Activated CD8-positive, alpha-beta T cell treated with anti-CD3 and anti-CD28 coated beads, Interleukin-2, amount 10 ng/mL, durations not matched to agents 7 days and 5 days (primary cell): ENCODE measurements at regions of chr1 and their contacts with region 1.

Region 1: DNA sequence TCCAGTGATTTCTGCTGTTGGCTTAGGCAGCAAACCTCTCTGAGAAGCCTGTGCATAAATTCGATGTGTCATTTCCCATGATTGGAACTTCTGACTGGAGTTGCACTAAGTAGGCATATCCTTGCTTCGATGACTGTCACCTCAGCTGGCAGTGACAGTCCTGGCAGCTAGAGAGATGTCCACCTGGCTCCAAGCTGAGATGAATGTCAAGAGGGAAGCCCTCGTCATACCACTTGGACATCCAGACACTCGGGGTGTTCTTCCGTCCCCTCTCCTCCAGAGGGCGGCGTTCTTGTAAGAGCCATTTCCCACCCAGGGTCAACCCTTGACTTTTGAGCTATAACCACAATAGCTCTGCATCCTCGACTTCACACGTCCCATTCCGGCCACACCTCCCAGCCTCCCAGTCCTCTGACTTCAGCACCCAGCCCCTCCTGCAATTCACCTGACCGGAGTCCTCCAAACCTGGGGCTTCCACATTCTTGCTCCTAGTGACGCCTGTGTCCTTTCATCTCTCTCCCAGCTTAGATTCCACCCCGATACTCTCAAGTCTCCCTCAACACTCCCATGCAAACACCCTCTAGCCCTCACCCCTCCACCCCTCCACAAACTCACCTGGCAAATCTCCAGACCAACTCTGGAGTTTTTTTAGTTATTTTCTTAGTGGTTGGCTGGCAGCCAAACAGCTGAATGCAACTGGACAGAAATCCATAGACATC is 17.3 kb downstream of the CA6 start:
- DNase-seq: peak; percentile 80
- ATAC-seq: peak; percentile 42
- H3K4me3 Mint-ChIP-seq: peak overlapping the region; percentile 99
- H3K27ac Mint-ChIP-seq: peak overlapping the region; percentile 85
- H3K4me1 Mint-ChIP-seq: peaks cover 83% of the 10 kb centered on the region
- H3K27me3 Mint-ChIP-seq: no peaks in the 10 kb centered on the region

Region 2: GRCh38 chr1:8925406-8925805 is 37.6 kb before region 1 on chr1:
- CTCF ChIA-PET with region 1: interaction called, 192 read pairs
- POLR2A ChIA-PET with region 1: interaction called, 431 read pairs
- DNase-seq: no peak
- ATAC-seq: no peak
- H3K4me3 Mint-ChIP-seq: no peak overlapping the region
- H3K27ac Mint-ChIP-seq: no peak overlapping the region
- H3K4me1 Mint-ChIP-seq: peaks cover 39% of the 10 kb centered on the region
- H3K27me3 Mint-ChIP-seq: no peaks in the 10 kb centered on the region

Region 3: GRCh38 chr1:8941906-8942305 is 21.1 kb before region 1 on chr1:
- CTCF ChIA-PET with region 1: interaction called, 118 read pairs
- POLR2A ChIA-PET with region 1: interaction called, 177 read pairs
- DNase-seq: no peak
- ATAC-seq: no peak
- H3K4me3 Mint-ChIP-seq: no peak overlapping the region
- H3K27ac Mint-ChIP-seq: peak overlapping the region; percentile 61
- H3K4me1 Mint-ChIP-seq: peaks cover 94% of the 10 kb centered on the region
- H3K27me3 Mint-ChIP-seq: no peaks in the 10 kb centered on the region

Region 4: GRCh38 chr1:8947127-8947691 is 15.8 kb before region 1 on chr1:
- CTCF ChIA-PET with region 1: interaction called, 118 read pairs
- POLR2A ChIA-PET with region 1: interaction called, 177 read pairs
- DNase-seq: peak; percentile 51
- ATAC-seq: peak; percentile 9
- H3K4me3 Mint-ChIP-seq: peak overlapping the region; percentile 65
- H3K27ac Mint-ChIP-seq: peak overlapping the region; percentile 97
- H3K4me1 Mint-ChIP-seq: peaks cover 93% of the 10 kb centered on the region
- H3K27me3 Mint-ChIP-seq: no peaks in the 10 kb centered on the region